ENCODE measurements at regions of chr15 and their contacts with region 1.

Region 1: DNA sequence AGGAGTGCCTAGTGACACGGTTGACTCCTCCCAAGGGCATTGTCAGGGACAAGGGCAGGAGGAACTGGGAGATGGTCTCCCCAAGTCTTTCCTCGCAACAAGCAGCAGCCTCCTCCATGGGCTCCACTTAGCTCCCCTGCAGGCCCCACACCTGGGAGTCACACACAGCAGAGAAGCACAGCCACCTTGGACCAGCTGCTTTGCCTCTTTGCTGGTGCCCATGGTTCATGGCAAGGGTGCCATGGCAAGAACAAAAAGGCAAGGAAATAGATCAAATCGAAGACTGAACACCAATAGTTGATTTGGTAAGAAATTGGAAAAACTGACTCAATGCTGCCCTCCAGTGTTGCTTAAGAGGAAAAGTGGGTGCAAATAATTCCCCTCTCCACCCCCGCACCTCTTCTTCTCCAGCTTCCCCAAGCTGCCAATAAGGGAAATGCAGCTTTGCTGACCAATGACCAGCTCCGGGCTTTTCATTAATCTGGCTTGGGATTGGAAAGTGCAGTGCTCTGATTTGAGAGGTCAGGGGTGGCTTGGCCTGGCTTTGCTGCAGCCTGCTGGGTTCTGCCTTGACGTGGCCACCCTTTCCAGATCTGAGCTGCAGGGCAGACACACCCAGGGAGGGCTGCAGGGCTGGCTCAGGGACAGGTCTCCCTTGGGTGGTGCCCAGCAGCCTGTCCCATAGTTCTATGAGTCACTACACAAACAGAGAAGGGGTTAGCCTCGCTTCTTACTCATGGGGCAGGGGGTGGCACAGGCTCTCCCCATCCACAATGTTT is 162.0 kb downstream of the KLF13 start:
- DNase-seq: peak in 6 of 9 experiments; percentile 29 to 88 (median 56)
- ATAC-seq: peak; percentile 59
- H3K4me3 ChIP-seq: no peak overlapping the region
- H3K4me3 Mint-ChIP-seq: no peak overlapping the region
- H3K27ac ChIP-seq: no peak overlapping the region
- H3K27ac Mint-ChIP-seq: no peak overlapping the region
- H3K4me1 ChIP-seq: peaks cover 30% of the 10 kb centered on the region
- H3K4me1 Mint-ChIP-seq: peaks cover 39% of the 10 kb centered on the region
- H3K27me3 ChIP-seq: no peaks in the 10 kb centered on the region
- H3K27me3 Mint-ChIP-seq: no peaks in the 10 kb centered on the region
- CTCF ChIP-seq: peak; percentile 88

Region 2: DNA sequence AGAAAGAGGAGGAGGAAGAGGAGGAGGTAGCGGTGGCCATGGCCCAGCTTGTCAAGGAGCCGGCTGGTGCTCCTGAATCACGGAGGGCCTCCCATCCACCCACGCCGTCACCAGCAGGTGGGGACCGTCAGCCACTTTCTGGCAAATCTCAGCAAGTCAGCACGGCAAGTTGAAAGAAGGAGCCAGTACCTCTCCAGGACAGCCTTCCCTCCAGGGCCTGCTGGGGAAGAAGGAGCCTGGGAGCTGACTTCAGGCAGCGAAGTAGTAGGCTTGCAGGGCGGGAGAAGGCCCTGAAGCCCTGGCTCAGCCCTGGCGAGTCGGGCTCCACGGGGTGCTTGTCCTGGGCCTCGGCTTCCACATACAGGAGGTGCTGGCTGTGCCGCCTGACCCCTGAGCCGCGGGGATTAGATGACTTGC is 287.9 kb before region 1 on chr15:
- CTCF ChIA-PET with region 1: interaction called, 206 read pairs
- POLR2A ChIA-PET with region 1: interaction called, 8 read pairs
- intact Hi-C with region 1: loop called (anchors 1 kb)
- DNase-seq: peak; percentile 52 to 83 (median 71)
- ATAC-seq: peak; percentile 76
- H3K4me3 ChIP-seq: no peak overlapping the region
- H3K4me3 Mint-ChIP-seq: no peak overlapping the region
- H3K27ac ChIP-seq: no peak overlapping the region
- H3K27ac Mint-ChIP-seq: no peak overlapping the region
- H3K4me1 ChIP-seq: peaks cover 20% of the 10 kb centered on the region
- H3K4me1 Mint-ChIP-seq: peaks cover 20% of the 10 kb centered on the region
- H3K27me3 ChIP-seq: no peaks in the 10 kb centered on the region
- H3K27me3 Mint-ChIP-seq: no peaks in the 10 kb centered on the region
- CTCF ChIP-seq: peak; percentile 51

Region 3: DNA sequence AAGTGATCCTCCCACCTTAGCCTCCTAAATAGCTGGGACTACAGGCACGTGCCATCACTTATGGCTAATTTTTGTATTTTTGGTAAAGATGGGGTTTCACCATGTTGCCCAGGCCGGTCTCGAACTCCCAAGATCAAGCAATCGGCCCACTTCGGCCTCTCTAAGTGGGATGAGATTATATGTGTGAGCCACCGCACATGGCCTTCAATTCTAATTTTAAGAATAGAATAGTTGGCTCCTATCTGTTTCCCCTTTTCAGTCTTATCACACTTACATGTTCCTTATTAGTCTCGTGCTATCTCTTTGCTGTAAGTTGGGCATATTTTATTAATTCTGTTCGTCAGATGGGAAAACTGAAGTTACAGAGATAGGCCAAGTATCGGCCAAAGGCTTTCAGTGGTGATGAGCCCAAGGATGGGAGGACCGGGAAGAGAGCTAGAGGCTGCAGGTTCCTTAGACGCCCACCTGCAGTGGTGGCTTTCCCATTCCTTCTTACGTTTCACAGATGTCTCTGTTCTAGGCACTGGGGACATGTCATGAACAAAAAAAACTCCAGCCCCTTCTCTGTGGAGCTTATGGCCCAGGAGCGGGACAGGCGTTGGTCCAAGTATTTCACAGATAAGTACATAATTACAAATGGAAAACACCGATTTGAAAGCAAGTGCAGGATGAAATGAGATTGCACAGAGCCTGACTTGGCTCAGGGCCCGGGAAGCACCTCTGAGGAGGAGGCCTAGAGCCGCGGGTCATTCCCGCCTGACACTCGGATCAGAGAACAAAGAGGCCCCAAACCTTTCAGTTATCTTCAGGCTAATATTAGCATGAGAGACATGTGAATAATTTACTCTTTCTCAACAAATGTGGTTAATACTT is 253.1 kb before region 1 on chr15:
- CTCF ChIA-PET with region 1: no interaction called
- POLR2A ChIA-PET with region 1: no interaction called
- intact Hi-C with region 1: no loop called
- DNase-seq: no peak
- ATAC-seq: no peak
- H3K4me3 ChIP-seq: no peak overlapping the region
- H3K4me3 Mint-ChIP-seq: no peak overlapping the region
- H3K27ac ChIP-seq: no peak overlapping the region
- H3K27ac Mint-ChIP-seq: no peak overlapping the region
- H3K4me1 ChIP-seq: peaks cover 13% of the 10 kb centered on the region
- H3K4me1 Mint-ChIP-seq: peaks cover 23% of the 10 kb centered on the region
- H3K27me3 ChIP-seq: no peaks in the 10 kb centered on the region
- H3K27me3 Mint-ChIP-seq: no peaks in the 10 kb centered on the region
- CTCF ChIP-seq: no peak

Region 4: GRCh38 chr15:31308185-31308639 is 180.4 kb before region 1 on chr15:
- CTCF ChIA-PET with region 1: interaction called, 18 read pairs
- POLR2A ChIA-PET with region 1: interaction called, 4 read pairs
- intact Hi-C with region 1: loop called (anchors 1 to 2 kb)
- DNase-seq: peak in 5 of 9 experiments; percentile 15 to 62 (median 38)
- ATAC-seq: peak; percentile 71
- H3K4me3 ChIP-seq: no peak overlapping the region
- H3K4me3 Mint-ChIP-seq: peak overlapping the region; percentile 19
- H3K27ac ChIP-seq: no peak overlapping the region
- H3K27ac Mint-ChIP-seq: no peak overlapping the region
- H3K4me1 ChIP-seq: peaks cover 35% of the 10 kb centered on the region
- H3K4me1 Mint-ChIP-seq: peaks cover 44% of the 10 kb centered on the region
- H3K27me3 ChIP-seq: peaks cover 0 to 3% of the 10 kb centered on the region in 2 experiments
- H3K27me3 Mint-ChIP-seq: no peaks in the 10 kb centered on the region
- CTCF ChIP-seq: no peak

Region 5: GRCh38 chr15:31344823-31345605 is 143.6 kb before region 1 on chr15:
- CTCF ChIA-PET with region 1: interaction called, 42 read pairs
- POLR2A ChIA-PET with region 1: interaction called, 6 read pairs
- intact Hi-C with region 1: loop called (anchors 5 kb)
- DNase-seq: peak in 1 of 9 experiments; percentile 68
- ATAC-seq: no peak
- H3K4me3 ChIP-seq: peak overlapping the region; percentile 55 to 72
- H3K4me3 Mint-ChIP-seq: peak overlapping the region; percentile 91
- H3K27ac ChIP-seq: peak overlapping the region; percentile 70 to 78
- H3K27ac Mint-ChIP-seq: peak overlapping the region; percentile 97
- H3K4me1 ChIP-seq: peaks cover 99% of the 10 kb centered on the region
- H3K4me1 Mint-ChIP-seq: peaks cover 98% of the 10 kb centered on the region
- H3K27me3 ChIP-seq: no peaks in the 10 kb centered on the region
- H3K27me3 Mint-ChIP-seq: no peaks in the 10 kb centered on the region
- CTCF ChIP-seq: no peak

Region 6: DNA sequence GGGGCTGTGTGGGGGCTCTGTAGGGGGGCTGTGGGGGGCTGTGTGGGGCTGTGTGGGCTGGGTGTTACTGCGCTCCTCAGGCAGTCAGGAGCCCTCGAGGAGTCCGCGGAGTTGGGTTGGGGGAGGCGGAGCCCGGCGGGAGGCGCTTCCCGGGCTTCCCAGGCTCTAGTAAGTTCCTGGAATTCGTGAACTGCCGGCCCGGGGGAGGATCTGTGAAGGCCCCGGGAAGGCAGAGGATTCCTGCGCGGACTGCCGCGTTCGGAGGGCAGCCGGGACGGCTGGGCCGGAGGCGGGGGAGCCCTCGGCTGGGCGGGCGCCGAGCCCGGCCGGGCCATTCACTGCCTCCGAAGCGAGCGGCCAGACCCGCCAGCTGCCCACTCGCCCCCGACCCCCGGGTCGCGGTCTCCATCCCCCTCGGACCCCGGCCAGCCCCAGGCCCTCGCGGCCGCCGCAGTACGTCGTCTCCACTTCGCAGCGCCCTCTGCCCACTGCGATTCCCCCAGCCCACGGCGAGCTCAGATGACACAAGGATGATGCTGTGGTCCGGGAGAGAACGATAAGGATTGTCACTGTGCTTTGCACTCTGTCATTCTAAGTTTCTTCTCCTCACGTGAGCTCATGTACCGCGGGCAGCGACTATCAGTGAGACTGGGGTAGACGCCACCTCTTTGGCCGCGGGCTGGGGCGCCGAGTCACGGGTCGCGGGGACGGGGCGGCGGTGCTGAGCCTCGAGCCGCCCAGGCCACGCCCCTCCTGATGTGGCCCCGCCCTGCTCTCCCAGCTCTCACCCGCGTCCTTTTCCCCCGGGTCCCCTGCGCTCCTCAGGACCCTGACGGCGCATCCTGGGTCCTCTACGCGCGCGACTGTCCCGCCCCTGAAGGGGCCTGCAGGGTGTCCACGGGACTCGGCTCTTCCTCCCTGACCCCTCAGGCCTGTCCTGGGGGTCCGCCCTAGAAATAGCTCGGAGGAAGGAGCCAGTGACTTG is 96.6 kb before region 1 on chr15:
- CTCF ChIA-PET with region 1: interaction called, 23 read pairs
- POLR2A ChIA-PET with region 1: interaction called, 9 read pairs
- intact Hi-C with region 1: loop called (anchors 2 to 5 kb)
- DNase-seq: peak; percentile 62 to 92 (median 86)
- ATAC-seq: peak; percentile 82
- H3K4me3 ChIP-seq: peak overlapping the region; percentile 86 to 95
- H3K4me3 Mint-ChIP-seq: peak overlapping the region; percentile 91
- H3K27ac ChIP-seq: peak overlapping the region; percentile 80 to 81
- H3K27ac Mint-ChIP-seq: peak overlapping the region; percentile 95
- H3K4me1 ChIP-seq: peaks cover 44% of the 10 kb centered on the region
- H3K4me1 Mint-ChIP-seq: peaks cover 61% of the 10 kb centered on the region
- H3K27me3 ChIP-seq: no peaks in the 10 kb centered on the region
- H3K27me3 Mint-ChIP-seq: no peaks in the 10 kb centered on the region
- CTCF ChIP-seq: no peak

Region 7: GRCh38 chr15:31435261-31435911 is 53.2 kb before region 1 on chr15:
- CTCF ChIA-PET with region 1: interaction called, 149 read pairs
- POLR2A ChIA-PET with region 1: interaction called, 65 read pairs
- intact Hi-C with region 1: loop called (anchors 1 kb)
- DNase-seq: peak; percentile 62 to 96 (median 84)
- ATAC-seq: peak; percentile 70
- H3K4me3 ChIP-seq: peak overlapping the region; percentile 43 to 46
- H3K4me3 Mint-ChIP-seq: peak overlapping the region; percentile 80
- H3K27ac ChIP-seq: peak overlapping the region; percentile 89 to 95
- H3K27ac Mint-ChIP-seq: peak overlapping the region; percentile 98
- H3K4me1 ChIP-seq: peaks cover 66% of the 10 kb centered on the region
- H3K4me1 Mint-ChIP-seq: peaks cover 83% of the 10 kb centered on the region
- H3K27me3 ChIP-seq: no peaks in the 10 kb centered on the region
- H3K27me3 Mint-ChIP-seq: no peaks in the 10 kb centered on the region
- CTCF ChIP-seq: peak; percentile 33

Region 8: GRCh38 chr15:31472636-31473384 is 15.8 kb before region 1 on chr15:
- CTCF ChIA-PET with region 1: interaction called, 45 read pairs
- POLR2A ChIA-PET with region 1: interaction called, 37 read pairs
- intact Hi-C with region 1: no loop called
- DNase-seq: peak in 8 of 9 experiments; percentile 26 to 82 (median 57)
- ATAC-seq: peak; percentile 84
- H3K4me3 ChIP-seq: peak overlapping the region; percentile 24 to 28
- H3K4me3 Mint-ChIP-seq: peak overlapping the region; percentile 79
- H3K27ac ChIP-seq: peak overlapping the region; percentile 52 to 78
- H3K27ac Mint-ChIP-seq: peak overlapping the region; percentile 96
- H3K4me1 ChIP-seq: peaks cover 39% of the 10 kb centered on the region
- H3K4me1 Mint-ChIP-seq: peaks cover 59% of the 10 kb centered on the region
- H3K27me3 ChIP-seq: no peaks in the 10 kb centered on the region
- H3K27me3 Mint-ChIP-seq: no peaks in the 10 kb centered on the region
- CTCF ChIP-seq: no peak

Region 9: DNA sequence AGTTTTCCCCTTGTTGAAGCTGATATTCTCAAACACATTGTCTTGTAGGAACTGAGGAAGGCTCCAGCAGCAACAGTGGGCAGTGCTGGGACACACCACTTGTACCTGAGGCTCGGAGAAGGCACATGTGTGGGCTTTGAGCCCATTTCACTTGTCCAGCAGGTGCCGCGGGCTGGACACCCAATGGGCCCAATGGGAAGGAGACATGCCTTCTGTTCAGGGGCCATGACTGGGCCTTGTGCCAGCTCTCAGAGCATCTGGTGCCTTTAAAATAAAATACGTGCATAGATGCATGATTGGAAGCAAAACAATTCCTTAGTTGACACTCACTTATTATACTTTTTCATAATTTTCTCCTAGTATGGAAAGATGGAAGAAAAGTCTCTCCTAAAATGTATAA is 172.2 kb after region 1 on chr15:
- CTCF ChIA-PET with region 1: no interaction called
- POLR2A ChIA-PET with region 1: no interaction called
- intact Hi-C with region 1: no loop called
- DNase-seq: no peak
- ATAC-seq: no peak
- H3K4me3 ChIP-seq: no peak overlapping the region
- H3K4me3 Mint-ChIP-seq: no peak overlapping the region
- H3K27ac ChIP-seq: no peak overlapping the region
- H3K27ac Mint-ChIP-seq: no peak overlapping the region
- H3K4me1 ChIP-seq: no peaks in the 10 kb centered on the region
- H3K4me1 Mint-ChIP-seq: no peaks in the 10 kb centered on the region
- H3K27me3 ChIP-seq: no peaks in the 10 kb centered on the region
- H3K27me3 Mint-ChIP-seq: peaks cover 5% of the 10 kb centered on the region
- CTCF ChIP-seq: no peak